IMR-90 (cell line): ENCODE measurements at regions of chr13 and their contacts with region 1.

Region 1: DNA sequence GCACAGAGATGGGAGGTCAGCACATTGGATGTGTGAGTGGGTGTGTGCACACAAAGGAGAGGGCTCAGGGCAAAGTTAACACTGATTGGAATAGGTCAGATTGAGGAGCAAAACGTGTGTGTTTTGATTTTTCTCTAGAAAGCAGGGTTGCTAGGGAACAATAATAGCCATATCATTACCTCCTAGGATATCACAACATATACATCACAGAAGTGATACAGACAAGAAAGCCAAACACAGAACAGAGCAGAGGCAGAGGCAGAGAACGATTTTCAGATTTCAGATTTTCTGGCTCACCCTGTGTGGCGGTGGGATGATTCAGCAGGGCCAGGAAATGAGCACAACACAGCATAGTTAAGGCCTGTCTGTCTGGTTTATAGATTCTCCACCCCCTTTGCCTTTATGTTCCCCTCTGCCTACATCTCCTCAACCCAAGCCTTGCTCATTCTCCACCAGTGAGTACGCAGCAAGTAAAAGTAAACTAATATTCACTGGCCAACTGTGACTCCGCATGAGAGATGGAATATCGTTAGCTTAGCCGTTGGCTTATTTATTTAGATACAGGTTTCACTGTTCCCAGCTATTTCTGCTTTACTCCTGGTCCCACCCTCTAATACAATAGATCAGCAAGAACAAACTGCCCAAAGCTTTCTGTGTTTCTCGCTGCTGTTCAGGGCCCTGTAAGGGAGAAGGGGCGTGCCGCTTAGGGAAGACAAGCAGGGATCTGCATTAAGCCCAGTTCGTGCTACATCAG is 182.7 kb upstream of the TSC22D1 start:
- DNase-seq: peak; percentile 98
- ATAC-seq: peak; percentile 98
- H3K4me3 ChIP-seq: no peak overlapping the region
- H3K27ac ChIP-seq: peak overlapping the region; percentile 78
- H3K4me1 ChIP-seq: peaks cover 12% of the 10 kb centered on the region
- H3K27me3 ChIP-seq: no peaks in the 10 kb centered on the region
- CTCF ChIP-seq: no peak
- POLR2A ChIP-seq: peak; percentile 43; the same call in 1 of the 2 replicates
- RAD21 ChIP-seq: peak; percentile 33

Region 2: DNA sequence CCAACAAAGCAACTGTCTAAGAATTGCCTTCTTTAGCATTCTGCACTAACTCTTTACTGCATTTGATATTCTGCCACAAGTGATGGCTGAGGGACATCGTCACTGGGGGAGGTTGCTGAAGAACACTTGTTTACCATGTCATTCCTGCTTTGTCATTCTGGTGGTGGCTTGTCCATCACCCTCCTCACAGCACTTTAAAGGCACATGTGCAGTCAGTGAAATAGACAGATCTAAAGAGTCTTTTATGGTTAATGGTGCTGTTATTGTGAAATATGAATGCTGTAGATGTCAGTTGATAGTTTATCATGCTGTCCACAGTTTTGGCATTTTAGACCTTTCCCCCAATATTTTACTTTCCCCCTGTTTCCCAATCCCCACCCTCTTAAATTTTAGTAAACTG is 61.7 kb before region 1 on chr13:
- CTCF ChIA-PET with region 1: no interaction called
- POLR2A ChIA-PET with region 1: no interaction called
- dilution Hi-C with region 1: no loop called
- in situ Hi-C with region 1: no loop called
- intact Hi-C with region 1: loop called (anchors 2 kb)
- DNase-seq: no peak
- ATAC-seq: no peak
- H3K4me3 ChIP-seq: no peak overlapping the region
- H3K27ac ChIP-seq: no peak overlapping the region
- H3K4me1 ChIP-seq: no peaks in the 10 kb centered on the region
- H3K27me3 ChIP-seq: no peaks in the 10 kb centered on the region
- CTCF ChIP-seq: no peak
- POLR2A ChIP-seq: no peak
- RAD21 ChIP-seq: no peak

Region 3: DNA sequence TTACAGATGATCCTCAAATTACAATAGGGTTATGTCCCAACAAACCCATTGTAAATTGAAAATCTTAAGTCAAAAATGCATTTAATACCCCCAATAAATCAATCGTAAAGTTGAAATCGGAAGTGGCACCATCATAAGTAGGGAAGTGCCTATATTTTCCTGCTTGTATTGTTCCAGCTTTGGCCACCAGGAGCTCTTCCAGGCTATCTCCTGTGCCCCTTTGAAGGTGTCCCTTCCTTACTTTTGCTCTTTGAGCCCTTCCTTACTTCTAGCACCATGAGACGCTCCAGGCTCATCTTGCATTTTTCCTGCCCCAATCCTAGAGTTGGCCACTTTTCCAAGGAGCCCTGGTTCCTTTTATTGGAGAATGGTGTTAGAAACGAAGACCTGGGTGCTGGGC is 19.7 kb before region 1 on chr13:
- CTCF ChIA-PET with region 1: no interaction called
- POLR2A ChIA-PET with region 1: no interaction called
- dilution Hi-C with region 1: no loop called
- in situ Hi-C with region 1: no loop called
- intact Hi-C with region 1: loop called (anchors 2 kb)
- DNase-seq: no peak
- ATAC-seq: no peak
- H3K4me3 ChIP-seq: no peak overlapping the region
- H3K27ac ChIP-seq: no peak overlapping the region
- H3K4me1 ChIP-seq: peaks cover 7% of the 10 kb centered on the region
- H3K27me3 ChIP-seq: no peaks in the 10 kb centered on the region
- CTCF ChIP-seq: no peak
- POLR2A ChIP-seq: no peak
- RAD21 ChIP-seq: no peak

Region 4: GRCh38 chr13:44815623-44816022 is 56.8 kb after region 1 on chr13:
- CTCF ChIA-PET with region 1: no interaction called
- POLR2A ChIA-PET with region 1: interaction called, 10 read pairs
- dilution Hi-C with region 1: no loop called
- in situ Hi-C with region 1: no loop called
- intact Hi-C with region 1: no loop called
- DNase-seq: peak; percentile 98
- ATAC-seq: peak; percentile 87
- H3K4me3 ChIP-seq: no peak overlapping the region
- H3K27ac ChIP-seq: peak overlapping the region; percentile 63
- H3K4me1 ChIP-seq: peaks cover 27% of the 10 kb centered on the region
- H3K27me3 ChIP-seq: no peaks in the 10 kb centered on the region
- CTCF ChIP-seq: no peak
- POLR2A ChIP-seq: no peak
- RAD21 ChIP-seq: peak; percentile 8; the same call in 1 of the 2 replicates